ENCODE measurements at regions of chr10 and their contacts with region 1.

Region 1: GRCh38 chr10:79400146-79401004 is 45.0 kb downstream of the ZCCHC24 start:
- DNase-seq: no peak
- ATAC-seq: no peak
- H3K4me3 ChIP-seq: no peak overlapping the region
- H3K27ac ChIP-seq: peak overlapping the region in 1 of 2 donors; percentile 4
- H3K4me1 ChIP-seq: no peaks in the 10 kb centered on the region
- H3K27me3 ChIP-seq: no peaks in the 10 kb centered on the region

Region 2: GRCh38 chr10:79438021-79438698 is 37.8 kb after region 1 on chr10:
- intact Hi-C with region 1: loop called (anchors 5 kb)
- DNase-seq: no peak
- ATAC-seq: no peak
- H3K4me3 ChIP-seq: no peak overlapping the region
- H3K27ac ChIP-seq: no peak overlapping the region
- H3K4me1 ChIP-seq: no peaks in the 10 kb centered on the region
- H3K27me3 ChIP-seq: no peaks in the 10 kb centered on the region

Region 3: DNA sequence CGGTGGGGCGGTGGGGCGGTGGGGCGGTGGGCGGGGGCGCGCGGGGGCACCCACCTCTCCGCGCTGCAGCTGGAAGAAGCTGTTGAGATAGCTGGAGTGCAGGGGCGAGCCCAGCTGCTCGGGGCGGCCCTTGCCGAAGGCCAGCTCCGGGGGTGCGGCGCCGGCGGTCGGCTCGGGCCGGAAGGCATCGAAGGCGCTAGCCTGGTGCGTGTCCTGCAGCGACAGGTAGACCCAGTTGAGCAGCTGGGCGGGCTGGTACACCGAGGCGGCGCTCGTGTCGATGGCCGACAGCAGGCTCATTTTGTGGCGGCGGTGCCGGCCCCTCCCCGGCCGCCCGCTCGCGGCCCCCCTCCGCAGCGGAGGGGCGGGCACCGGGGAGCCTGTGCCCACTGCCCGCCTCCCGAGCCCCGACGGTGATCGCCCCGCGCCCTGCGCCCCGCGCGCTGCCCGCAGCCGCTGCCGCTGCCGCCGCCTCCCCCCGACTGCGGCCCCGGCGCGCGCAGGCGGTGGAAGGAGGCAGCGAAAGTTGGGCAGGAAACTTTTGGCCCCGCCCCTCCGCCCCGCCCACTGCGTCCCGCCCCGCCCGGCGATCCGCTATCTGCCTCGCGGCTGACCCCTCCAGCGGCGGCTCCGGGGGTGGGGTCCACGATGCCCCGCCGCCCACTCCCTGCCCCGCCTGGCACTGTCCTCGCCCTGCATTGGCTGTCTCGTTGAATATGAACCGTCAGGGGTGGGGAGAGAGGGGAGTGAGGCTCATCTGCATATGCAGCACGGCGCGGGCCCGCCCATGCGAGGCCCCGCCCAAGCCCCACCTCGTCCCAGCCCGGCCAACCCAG is 45.0 kb after region 1 on chr10 and contains the start of gene ZCCHC24:
- intact Hi-C with region 1: loop called in 1 of 2 experiments (anchors 5 kb)
- DNase-seq: peak; percentile 99
- ATAC-seq: peak; percentile 96
- H3K4me3 ChIP-seq: peak within 1 kb of the TSS; percentile 87 to 90
- H3K27ac ChIP-seq: peak within 1 kb of the TSS; percentile 38 to 90
- H3K4me1 ChIP-seq: no peaks in the 10 kb centered on the region
- H3K27me3 ChIP-seq: no peaks in the 10 kb centered on the region
- total RNA-seq, gene ZCCHC24: 79.3 to 99.6 TPM

Measured in aorta (tissue), 5 donors.